CD4-positive, alpha-beta T cell (primary cell): ENCODE measurements at regions of chr21 and their contacts with region 1.

Region 1: GRCh38 chr21:17708522-17709265 is 96.0 kb upstream of the BTG3 start:
- DNase-seq: no peak
- ATAC-seq: no peak
- H3K4me3 ChIP-seq: no peak overlapping the region
- H3K4me3 Mint-ChIP-seq: no peak overlapping the region
- H3K27ac ChIP-seq: no peak overlapping the region
- H3K27ac Mint-ChIP-seq: no peak overlapping the region
- H3K4me1 ChIP-seq: no peaks in the 10 kb centered on the region
- H3K4me1 Mint-ChIP-seq: no peaks in the 10 kb centered on the region
- H3K27me3 ChIP-seq: no peaks in the 10 kb centered on the region
- H3K27me3 Mint-ChIP-seq: no peaks in the 10 kb centered on the region
- CTCF ChIP-seq: no peak

Region 2: DNA sequence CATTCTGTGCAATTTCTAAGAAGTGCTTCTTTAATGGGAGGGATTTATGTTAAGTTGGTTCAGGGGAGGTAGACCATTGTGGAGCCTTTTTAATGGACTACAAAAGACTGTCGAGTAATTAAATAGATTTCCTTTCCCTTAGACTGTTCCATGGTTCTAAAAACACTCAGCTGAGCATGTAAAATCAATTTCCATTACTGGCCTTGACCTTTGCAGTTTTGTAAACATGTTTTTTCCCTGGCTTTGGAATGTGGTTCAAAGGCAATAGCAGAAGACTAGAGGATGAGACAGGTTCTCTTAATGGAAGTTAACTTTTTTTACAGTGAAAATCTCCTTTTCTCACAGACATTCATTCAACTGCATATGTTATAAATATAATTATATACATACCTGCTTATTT is 58.4 kb before region 1 on chr21:
- CTCF ChIA-PET with region 1: no interaction called
- POLR2A ChIA-PET with region 1: no interaction called
- intact Hi-C with region 1: loop called in 1 of 2 experiments (anchors 10 kb)
- DNase-seq: no peak
- ATAC-seq: no peak
- H3K4me3 ChIP-seq: no peak overlapping the region
- H3K4me3 Mint-ChIP-seq: no peak overlapping the region
- H3K27ac ChIP-seq: no peak overlapping the region
- H3K27ac Mint-ChIP-seq: no peak overlapping the region
- H3K4me1 ChIP-seq: no peaks in the 10 kb centered on the region
- H3K4me1 Mint-ChIP-seq: no peaks in the 10 kb centered on the region
- H3K27me3 ChIP-seq: peaks cover 0 to 5% of the 10 kb centered on the region in 2 experiments
- H3K27me3 Mint-ChIP-seq: peaks cover 28% of the 10 kb centered on the region
- CTCF ChIP-seq: no peak